MCF 10A (cell line): ENCODE measurements at regions of chr16 and their contacts with region 1.

Region 1: GRCh38 chr16:19113453-19114351 is at the start of gene ITPRIPL2:
- DNase-seq: peak; percentile 94
- H3K4me3 Mint-ChIP-seq: peak within 1 kb of the TSS; percentile 84
- H3K27ac Mint-ChIP-seq: peak within 1 kb of the TSS; percentile 95
- H3K4me1 Mint-ChIP-seq: peaks cover 25% of the 10 kb centered on the region
- H3K27me3 Mint-ChIP-seq: no peaks in the 10 kb centered on the region
- CTCF ChIP-seq: no peak
- total RNA-seq, gene ITPRIPL2: 49.3 and 53.7 TPM in 2 replicates

Region 2: GRCh38 chr16:19102187-19102872 is 11.4 kb before region 1 on chr16:
- CTCF ChIA-PET with region 1: interaction called, 6 read pairs
- POLR2A ChIA-PET with region 1: interaction called, 23 read pairs
- intact Hi-C with region 1: no loop called
- DNase-seq: no peak
- H3K4me3 Mint-ChIP-seq: no peak overlapping the region
- H3K27ac Mint-ChIP-seq: no peak overlapping the region
- H3K4me1 Mint-ChIP-seq: peaks cover 2% of the 10 kb centered on the region
- H3K27me3 Mint-ChIP-seq: no peaks in the 10 kb centered on the region
- CTCF ChIP-seq: no peak

Region 3: GRCh38 chr16:19130852-19131810 is 17.4 kb after region 1 on chr16:
- CTCF ChIA-PET with region 1: interaction called, 20 read pairs
- POLR2A ChIA-PET with region 1: interaction called, 298 read pairs
- intact Hi-C with region 1: loop called (anchors 1 kb)
- DNase-seq: peak; percentile 69
- H3K4me3 Mint-ChIP-seq: no peak overlapping the region
- H3K27ac Mint-ChIP-seq: peak overlapping the region; percentile 68
- H3K4me1 Mint-ChIP-seq: peaks cover 32% of the 10 kb centered on the region
- H3K27me3 Mint-ChIP-seq: no peaks in the 10 kb centered on the region
- CTCF ChIP-seq: no peak

Region 4: DNA sequence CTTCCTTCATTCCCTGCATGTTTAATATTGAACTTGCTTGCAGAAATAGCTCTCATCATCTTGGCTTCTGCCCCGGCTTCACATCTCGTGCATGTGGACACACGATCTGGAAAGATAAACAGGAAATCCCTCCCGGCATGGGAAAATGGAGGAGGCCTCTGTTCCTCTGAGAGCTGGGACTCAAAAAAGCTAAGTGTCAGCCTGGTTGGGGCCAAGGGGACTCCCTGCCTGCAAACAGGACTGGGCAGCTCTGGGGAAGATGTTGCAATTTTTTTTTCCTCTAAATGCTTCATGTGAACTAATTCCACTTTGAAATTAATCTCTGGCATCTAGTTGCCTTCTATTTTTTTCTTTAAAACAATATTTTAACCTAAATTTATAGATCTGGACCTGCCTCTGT is 24.9 kb after region 1 on chr16:
- CTCF ChIA-PET with region 1: interaction called, 20 read pairs
- POLR2A ChIA-PET with region 1: interaction called, 298 read pairs
- intact Hi-C with region 1: loop called (anchors 1 kb)
- DNase-seq: peak; percentile 99
- H3K4me3 Mint-ChIP-seq: peak overlapping the region; percentile 24
- H3K27ac Mint-ChIP-seq: peak overlapping the region; percentile 44
- H3K4me1 Mint-ChIP-seq: peaks cover 61% of the 10 kb centered on the region
- H3K27me3 Mint-ChIP-seq: no peaks in the 10 kb centered on the region
- CTCF ChIP-seq: no peak

Region 5: GRCh38 chr16:19223235-19224170 is 109.8 kb after region 1 on chr16:
- CTCF ChIA-PET with region 1: no interaction called
- POLR2A ChIA-PET with region 1: no interaction called
- intact Hi-C with region 1: no loop called
- DNase-seq: peak; percentile 61
- H3K4me3 Mint-ChIP-seq: no peak overlapping the region
- H3K27ac Mint-ChIP-seq: no peak overlapping the region
- H3K4me1 Mint-ChIP-seq: peaks cover 11% of the 10 kb centered on the region
- H3K27me3 Mint-ChIP-seq: peaks cover 3% of the 10 kb centered on the region
- CTCF ChIP-seq: peak; percentile 58

Region 6: DNA sequence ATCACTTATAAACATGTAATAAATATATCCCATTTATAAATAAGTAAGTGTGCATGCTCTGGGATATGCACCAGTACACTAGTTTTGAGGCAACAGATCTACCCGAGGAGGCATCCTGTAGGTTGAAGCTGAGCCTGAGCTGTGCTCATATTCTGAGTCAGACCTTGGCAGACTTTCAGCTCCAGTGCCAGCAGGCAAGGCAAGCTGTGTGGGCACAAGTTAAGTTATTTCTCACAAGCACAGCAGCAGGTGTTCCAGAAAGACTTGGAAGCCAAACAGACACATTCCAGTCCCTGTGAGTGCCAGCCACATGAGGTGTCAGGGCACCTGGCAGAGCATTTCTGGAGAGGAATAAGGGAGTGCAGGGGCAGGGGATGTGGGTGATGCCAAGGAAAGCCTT is 170.5 kb after region 1 on chr16:
- CTCF ChIA-PET with region 1: no interaction called
- POLR2A ChIA-PET with region 1: interaction called, 5 read pairs
- intact Hi-C with region 1: loop called (anchors 10 kb)
- DNase-seq: peak; percentile 96
- H3K4me3 Mint-ChIP-seq: no peak overlapping the region
- H3K27ac Mint-ChIP-seq: no peak overlapping the region
- H3K4me1 Mint-ChIP-seq: peaks cover 24% of the 10 kb centered on the region
- H3K27me3 Mint-ChIP-seq: no peaks in the 10 kb centered on the region
- CTCF ChIP-seq: no peak

Region 7: DNA sequence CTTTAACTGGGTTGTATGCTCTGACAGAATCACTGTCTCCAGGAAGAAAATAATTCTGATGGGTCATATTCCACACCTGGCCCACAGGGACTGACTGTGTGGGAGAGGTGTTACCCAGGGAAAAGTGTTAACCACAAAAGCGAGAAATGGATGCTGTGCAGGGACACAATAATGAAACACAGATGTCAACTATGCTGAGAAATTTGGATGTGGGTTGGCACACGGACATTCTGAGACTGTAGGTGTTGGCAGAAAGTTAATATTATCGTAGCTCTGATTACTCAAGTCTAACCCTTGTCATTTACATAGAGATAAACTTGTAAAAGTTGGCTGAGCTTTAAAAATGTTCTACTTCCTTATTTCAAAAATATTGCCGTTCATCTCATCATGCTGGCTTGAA is 323.6 kb after region 1 on chr16:
- CTCF ChIA-PET with region 1: no interaction called
- POLR2A ChIA-PET with region 1: no interaction called
- intact Hi-C with region 1: no loop called
- DNase-seq: no peak
- H3K4me3 Mint-ChIP-seq: no peak overlapping the region
- H3K27ac Mint-ChIP-seq: no peak overlapping the region
- H3K4me1 Mint-ChIP-seq: peaks cover 7% of the 10 kb centered on the region
- H3K27me3 Mint-ChIP-seq: no peaks in the 10 kb centered on the region
- CTCF ChIP-seq: no peak